IMR-90 (cell line): ENCODE measurements at regions of chr17 and their contacts with region 1.

Region 1: GRCh38 chr17:35312790-35313711 is 60.4 kb downstream of the SLFN11 start:
- DNase-seq: peak; percentile 73
- ATAC-seq: peak; percentile 94
- H3K4me3 ChIP-seq: no peak overlapping the region
- H3K27ac ChIP-seq: no peak overlapping the region
- H3K4me1 ChIP-seq: peaks cover 3% of the 10 kb centered on the region; the same call in 1 of the 2 replicates
- H3K27me3 ChIP-seq: no peaks in the 10 kb centered on the region
- CTCF ChIP-seq: peak; percentile 80
- POLR2A ChIP-seq: no peak
- RAD21 ChIP-seq: peak; percentile 81

Region 2: GRCh38 chr17:34434052-34434451 is 879.0 kb before region 1 on chr17:
- CTCF ChIA-PET with region 1: no interaction called
- POLR2A ChIA-PET with region 1: no interaction called
- dilution Hi-C with region 1: no loop called
- in situ Hi-C with region 1: no loop called
- intact Hi-C with region 1: loop called (anchors 10 kb)
- DNase-seq: no peak
- ATAC-seq: no peak
- H3K4me3 ChIP-seq: no peak overlapping the region
- H3K27ac ChIP-seq: no peak overlapping the region
- H3K4me1 ChIP-seq: no peaks in the 10 kb centered on the region
- H3K27me3 ChIP-seq: no peaks in the 10 kb centered on the region
- CTCF ChIP-seq: no peak
- POLR2A ChIP-seq: no peak
- RAD21 ChIP-seq: no peak

Region 3: GRCh38 chr17:35170968-35171771 is 141.9 kb before region 1 on chr17:
- CTCF ChIA-PET with region 1: no interaction called
- POLR2A ChIA-PET with region 1: no interaction called
- dilution Hi-C with region 1: no loop called
- in situ Hi-C with region 1: no loop called
- intact Hi-C with region 1: loop called (anchors 1 kb)
- DNase-seq: peak; percentile 15
- ATAC-seq: peak; percentile 49
- H3K4me3 ChIP-seq: no peak overlapping the region
- H3K27ac ChIP-seq: no peak overlapping the region
- H3K4me1 ChIP-seq: peaks cover 4% of the 10 kb centered on the region; the same call in 1 of the 2 replicates
- H3K27me3 ChIP-seq: peaks cover 3% of the 10 kb centered on the region; the same call in 1 of the 2 replicates
- CTCF ChIP-seq: peak; percentile 50
- POLR2A ChIP-seq: no peak
- RAD21 ChIP-seq: peak; percentile 51

Region 4: DNA sequence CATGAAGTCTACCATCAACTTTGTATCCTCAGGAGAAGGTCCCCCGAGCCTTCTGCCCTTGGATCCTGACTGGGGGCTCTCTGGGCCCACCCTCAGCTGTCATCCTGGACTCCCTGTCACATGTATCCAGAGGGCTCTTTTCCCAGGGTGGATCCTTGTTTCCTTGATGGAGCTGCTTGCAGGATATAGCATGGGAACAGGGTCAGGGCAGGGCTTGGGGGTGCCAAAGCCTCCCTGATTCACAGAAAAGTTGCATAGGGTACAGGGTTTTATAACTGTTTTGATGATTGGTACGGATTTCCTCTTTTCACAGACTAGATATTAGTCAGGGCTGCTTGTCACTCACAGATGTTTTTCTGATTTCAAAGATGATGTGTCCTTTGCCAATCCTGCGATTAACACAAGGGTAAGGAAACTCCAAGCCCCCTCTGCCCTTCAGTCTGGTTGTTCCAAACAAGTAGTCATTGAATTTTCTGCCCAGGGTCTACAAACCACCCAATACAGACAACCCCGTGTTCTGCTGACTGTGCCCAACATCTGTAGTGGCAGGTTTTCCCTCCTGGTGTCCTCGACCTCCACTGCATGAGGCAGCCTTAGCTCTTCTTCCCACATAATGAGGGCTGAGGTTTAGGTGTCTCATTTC is 98.3 kb before region 1 on chr17:
- CTCF ChIA-PET with region 1: no interaction called
- POLR2A ChIA-PET with region 1: no interaction called
- dilution Hi-C with region 1: no loop called
- in situ Hi-C with region 1: no loop called
- intact Hi-C with region 1: no loop called
- DNase-seq: no peak
- ATAC-seq: no peak
- H3K4me3 ChIP-seq: no peak overlapping the region
- H3K27ac ChIP-seq: no peak overlapping the region
- H3K4me1 ChIP-seq: no peaks in the 10 kb centered on the region
- H3K27me3 ChIP-seq: peaks cover 7% of the 10 kb centered on the region
- CTCF ChIP-seq: no peak
- POLR2A ChIP-seq: no peak
- RAD21 ChIP-seq: no peak

Region 5: DNA sequence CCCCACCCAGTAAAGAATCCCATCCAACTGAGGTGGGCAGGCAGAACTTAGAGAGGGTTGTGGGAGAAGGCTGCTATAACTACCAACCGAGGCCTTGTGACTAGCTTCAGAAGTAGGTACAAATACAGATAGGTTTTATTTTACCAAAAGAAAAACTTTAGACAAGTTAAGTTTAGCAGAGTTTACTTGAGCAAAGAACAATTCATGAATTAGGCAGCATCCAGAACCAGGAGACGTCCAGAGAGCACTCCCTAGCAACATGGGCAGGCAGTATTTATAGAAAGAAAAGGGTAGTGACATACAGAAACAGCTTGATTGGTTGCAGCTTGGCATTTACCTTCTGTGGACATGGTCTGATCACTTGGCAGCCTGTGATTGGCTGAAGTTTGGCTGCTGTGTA is 28.1 kb before region 1 on chr17:
- CTCF ChIA-PET with region 1: interaction called, 4 read pairs
- POLR2A ChIA-PET with region 1: no interaction called
- dilution Hi-C with region 1: no loop called
- in situ Hi-C with region 1: no loop called
- intact Hi-C with region 1: loop called (anchors 1 kb)
- DNase-seq: no peak
- ATAC-seq: no peak
- H3K4me3 ChIP-seq: no peak overlapping the region
- H3K27ac ChIP-seq: no peak overlapping the region
- H3K4me1 ChIP-seq: no peaks in the 10 kb centered on the region
- H3K27me3 ChIP-seq: no peaks in the 10 kb centered on the region; the same call in none of the 2 replicates
- CTCF ChIP-seq: no peak
- POLR2A ChIP-seq: no peak
- RAD21 ChIP-seq: no peak

Region 6: GRCh38 chr17:35432176-35433074 is 119.4 kb after region 1 on chr17 and contains the start of gene SLFN12:
- CTCF ChIA-PET with region 1: no interaction called
- POLR2A ChIA-PET with region 1: no interaction called
- dilution Hi-C with region 1: no loop called
- in situ Hi-C with region 1: no loop called
- intact Hi-C with region 1: loop called (anchors 5 kb)
- DNase-seq: peak; percentile 98
- ATAC-seq: peak; percentile 78
- H3K4me3 ChIP-seq: peak within 1 kb of the TSS; percentile 59
- H3K27ac ChIP-seq: peak within 1 kb of the TSS; percentile 92
- H3K4me1 ChIP-seq: peaks cover 1% of the 10 kb centered on the region; the same call in 1 of the 2 replicates
- H3K27me3 ChIP-seq: no peaks in the 10 kb centered on the region
- CTCF ChIP-seq: no peak
- POLR2A ChIP-seq: peak; percentile 83; the same call in 1 of the 2 replicates
- RAD21 ChIP-seq: no peak
- total RNA-seq, gene SLFN12: 38.9 and 48.6 TPM in 2 replicates

Region 7: DNA sequence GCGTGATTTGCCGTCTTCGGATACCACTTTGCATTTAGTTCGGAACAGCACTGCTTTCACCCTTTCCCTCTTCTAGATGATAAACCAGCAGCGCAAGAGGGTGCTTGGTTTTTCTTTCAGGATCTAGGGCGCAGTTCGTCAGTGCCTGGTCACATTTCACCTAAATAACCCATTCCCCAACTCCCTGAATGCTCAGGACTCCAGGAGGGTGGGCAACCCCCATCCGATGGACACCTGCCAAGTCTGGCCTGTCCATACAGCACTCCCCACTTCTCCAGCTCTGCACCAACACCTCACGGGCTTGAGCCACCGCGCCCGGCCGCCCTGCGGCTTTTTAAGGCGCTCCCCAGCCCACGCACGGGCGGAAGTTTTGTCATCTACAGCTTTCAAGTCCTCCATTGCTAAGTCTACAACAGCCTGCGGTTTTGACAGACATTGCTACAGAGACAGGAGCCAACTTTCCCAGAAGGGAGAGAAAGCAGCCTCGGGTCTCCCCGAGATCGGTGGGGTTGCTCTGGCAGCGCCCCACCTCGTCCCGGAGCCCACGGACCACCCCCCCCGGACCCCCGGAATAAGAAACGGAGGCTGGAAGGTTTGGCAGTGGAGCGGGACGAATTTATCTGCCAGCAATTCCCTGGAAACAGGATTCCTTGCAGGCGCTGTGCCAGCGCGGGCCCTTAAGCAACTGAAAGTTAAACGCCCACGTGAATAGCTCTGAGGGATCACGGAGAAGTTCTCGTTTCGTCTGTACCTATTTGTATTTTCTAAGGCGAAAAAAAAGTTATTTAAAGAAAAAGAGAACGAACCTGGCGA is 174.1 kb after region 1 on chr17:
- CTCF ChIA-PET with region 1: no interaction called
- POLR2A ChIA-PET with region 1: no interaction called
- dilution Hi-C with region 1: no loop called
- in situ Hi-C with region 1: no loop called
- intact Hi-C with region 1: loop called (anchors 1 kb)
- DNase-seq: peak; percentile 56
- ATAC-seq: peak; percentile 71
- H3K4me3 ChIP-seq: peak overlapping the region; percentile 52
- H3K27ac ChIP-seq: no peak overlapping the region
- H3K4me1 ChIP-seq: no peaks in the 10 kb centered on the region
- H3K27me3 ChIP-seq: peaks cover 26% of the 10 kb centered on the region
- CTCF ChIP-seq: no peak
- POLR2A ChIP-seq: no peak
- RAD21 ChIP-seq: no peak

Region 8: DNA sequence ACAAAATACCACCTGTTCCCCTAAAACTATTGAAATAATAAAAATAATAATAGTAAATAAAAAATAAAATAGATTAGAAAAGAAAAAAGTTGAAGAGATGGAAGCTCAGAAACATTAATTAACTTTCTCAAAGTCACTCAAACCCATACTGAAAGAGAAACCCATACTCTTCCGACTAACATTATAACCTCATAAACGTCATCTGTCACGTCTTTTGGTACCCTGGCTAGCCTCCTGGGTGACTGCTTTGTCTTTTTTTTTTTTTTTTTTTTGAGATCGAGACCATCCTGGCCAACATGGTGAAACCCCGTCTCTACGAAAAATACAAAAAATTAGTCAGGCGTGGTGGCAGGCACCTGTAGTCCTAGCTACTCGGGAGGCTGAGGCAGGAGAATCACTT is 216.8 kb after region 1 on chr17:
- CTCF ChIA-PET with region 1: interaction called, 14 read pairs
- POLR2A ChIA-PET with region 1: no interaction called
- dilution Hi-C with region 1: loop called (anchors 25 kb)
- in situ Hi-C with region 1: loop called (anchors 5 kb)
- intact Hi-C with region 1: loop called (anchors 1 kb)
- DNase-seq: no peak
- ATAC-seq: no peak
- H3K4me3 ChIP-seq: no peak overlapping the region
- H3K27ac ChIP-seq: no peak overlapping the region
- H3K4me1 ChIP-seq: no peaks in the 10 kb centered on the region
- H3K27me3 ChIP-seq: no peaks in the 10 kb centered on the region; the same call in 1 of the 2 replicates
- CTCF ChIP-seq: no peak
- POLR2A ChIP-seq: no peak
- RAD21 ChIP-seq: no peak